ENCODE measurements at regions of chr16 and their contacts with region 1.

Region 1: GRCh38 chr16:5449901-5450300 is 352.3 kb upstream of the EEF2KMT start:
- DNase-seq: no peak
- H3K4me3 ChIP-seq: no peak overlapping the region
- H3K27ac ChIP-seq: no peak overlapping the region
- H3K4me1 ChIP-seq: no peaks in the 10 kb centered on the region
- H3K27me3 ChIP-seq: peaks cover 0 to 10% of the 10 kb centered on the region in 2 donors
- CTCF ChIP-seq: no peak
- POLR2A ChIP-seq: no peak

Region 2: DNA sequence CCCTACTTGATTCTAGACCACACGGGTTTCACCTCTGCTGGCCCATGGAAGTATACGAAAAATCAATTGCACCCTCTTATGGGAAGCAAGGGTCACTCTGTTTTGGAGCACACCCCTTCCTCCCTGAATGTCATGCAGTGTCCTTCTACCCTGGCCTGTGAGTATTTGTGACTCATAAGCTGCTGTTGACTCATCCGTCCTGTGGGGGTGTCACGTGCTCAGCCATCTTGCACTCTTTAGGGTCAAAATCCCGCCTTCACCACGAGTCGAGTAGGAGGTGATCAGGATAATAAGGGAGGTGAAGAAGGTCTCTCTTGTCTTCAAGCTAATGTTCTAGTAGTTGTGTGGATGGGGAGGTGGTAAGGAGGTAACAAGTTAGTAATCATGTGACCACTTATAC is 11.3 kb before region 1 on chr16:
- intact Hi-C with region 1: loop called (anchors 1 kb)
- DNase-seq: no peak
- H3K4me3 ChIP-seq: no peak overlapping the region
- H3K27ac ChIP-seq: no peak overlapping the region
- H3K4me1 ChIP-seq: no peaks in the 10 kb centered on the region
- H3K27me3 ChIP-seq: no peaks in the 10 kb centered on the region
- CTCF ChIP-seq: no peak
- POLR2A ChIP-seq: no peak

Measured in breast epithelium (tissue), 4 donors.